Mucosa of descending colon (tissue), 3 donors: ENCODE measurements at regions of chr7 and their contacts with region 1.

Region 1: GRCh38 chr7:31122649-31123058 is 70.5 kb downstream of the ADCYAP1R1 start:
- DNase-seq: peak in 2 of 3 donors; percentile 60 to 71
- ATAC-seq: peak; percentile 69
- H3K4me3 ChIP-seq: no peak overlapping the region
- H3K4me1 ChIP-seq: no peaks in the 10 kb centered on the region
- CTCF ChIP-seq: peak; percentile 52

Region 2: DNA sequence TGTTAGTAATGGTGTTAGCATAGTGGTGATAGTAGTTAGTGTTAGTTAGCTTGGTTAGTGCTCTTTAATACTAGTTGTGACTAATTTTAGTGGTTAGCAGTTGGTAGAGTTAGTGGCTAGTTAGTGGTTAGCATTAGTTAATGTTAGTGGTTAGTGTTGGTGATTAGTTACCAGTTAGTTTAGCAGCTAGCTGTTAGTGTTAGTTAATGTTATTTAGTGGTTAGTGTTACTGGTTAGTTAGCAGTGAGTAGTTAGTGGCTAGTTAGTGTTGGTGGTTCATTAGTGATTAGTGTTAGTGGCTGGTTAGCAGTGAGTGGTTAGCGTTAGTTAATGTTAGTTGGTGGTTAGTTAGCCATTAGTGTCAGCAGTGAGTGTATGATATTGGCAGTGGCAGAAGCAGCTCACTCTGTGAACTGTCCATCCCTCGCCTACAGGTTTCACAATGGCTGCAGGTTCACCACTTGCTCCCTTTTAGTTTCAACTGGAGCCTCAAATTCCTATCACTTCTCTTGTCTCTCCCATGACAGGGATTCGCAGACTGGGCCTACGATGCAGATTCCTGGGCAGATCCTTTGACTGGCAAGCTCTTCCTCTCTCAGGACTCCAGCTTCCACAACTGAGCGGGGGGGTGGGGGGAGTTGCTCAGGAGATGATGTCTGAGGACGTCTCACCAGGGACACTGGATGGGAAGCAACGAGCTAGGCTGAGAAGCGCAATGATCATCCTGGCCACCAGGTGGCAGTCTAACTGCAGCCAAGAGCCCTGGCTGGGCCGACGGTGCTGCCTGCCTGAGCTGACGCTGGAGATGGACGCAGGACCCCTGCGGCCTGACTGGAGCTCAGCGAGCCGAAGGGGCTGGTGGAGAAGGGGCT is 139.4 kb before region 1 on chr7:
- intact Hi-C with region 1: loop called (anchors 2 to 5 kb)
- DNase-seq: peak; percentile 72 to 90 (median 86)
- ATAC-seq: peak; percentile 85
- H3K4me3 ChIP-seq: no peak overlapping the region
- H3K4me1 ChIP-seq: no peaks in the 10 kb centered on the region
- CTCF ChIP-seq: peak; percentile 91